ENCODE measurements at regions of chr12 and their contacts with region 1.

Region 1: DNA sequence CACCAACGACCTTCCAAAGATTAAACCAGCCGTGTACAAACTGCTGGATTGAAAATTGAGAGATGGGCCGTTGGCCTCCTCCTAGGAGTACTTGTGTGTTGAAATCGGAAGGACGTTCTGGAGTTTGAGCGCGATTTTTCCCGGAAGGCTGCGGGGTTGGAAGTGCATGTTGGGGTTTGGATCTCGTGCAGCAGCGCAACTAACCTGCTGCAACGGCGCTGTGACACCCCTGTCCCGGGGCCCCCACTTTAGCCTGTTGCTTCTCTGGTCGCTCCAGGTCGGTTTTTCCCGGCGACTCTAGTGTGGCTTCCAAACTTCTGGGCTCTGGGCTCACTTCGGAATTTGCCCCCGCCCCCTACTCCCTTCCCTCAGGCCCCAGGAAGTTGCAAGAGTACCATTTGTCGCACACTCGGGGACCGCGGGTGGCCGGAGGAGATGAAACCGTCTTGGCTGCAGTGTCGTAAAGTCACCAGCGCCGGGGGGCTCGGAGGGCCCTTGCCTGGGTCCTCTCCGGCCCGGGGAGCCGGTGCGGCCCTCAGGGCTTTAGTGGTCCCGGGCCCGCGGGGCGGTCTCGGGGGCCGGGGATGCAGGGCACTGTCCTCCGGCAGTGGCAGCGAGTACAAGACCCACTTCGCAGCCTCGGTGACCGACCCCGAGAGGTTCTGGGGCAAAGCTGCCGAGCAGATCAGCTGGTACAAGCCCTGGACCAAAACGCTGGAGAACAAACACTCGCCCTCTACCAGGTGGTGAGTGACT is at the start of gene ACSS3:
- DNase-seq: no peak
- H3K4me3 ChIP-seq: peak within 1 kb of the TSS in 2 of 3 experiments; percentile 5 to 12
- H3K27ac ChIP-seq: peak within 1 kb of the TSS; percentile 19
- H3K4me1 ChIP-seq: peaks cover 15% of the 10 kb centered on the region
- H3K27me3 ChIP-seq: peaks cover 2 to 6% of the 10 kb centered on the region in 2 experiments
- CTCF ChIP-seq: no peak
- POLR2A ChIP-seq: no peak
- total RNA-seq, gene ACSS3: 0.53 and 0.86 TPM in 2 replicates

Region 2: DNA sequence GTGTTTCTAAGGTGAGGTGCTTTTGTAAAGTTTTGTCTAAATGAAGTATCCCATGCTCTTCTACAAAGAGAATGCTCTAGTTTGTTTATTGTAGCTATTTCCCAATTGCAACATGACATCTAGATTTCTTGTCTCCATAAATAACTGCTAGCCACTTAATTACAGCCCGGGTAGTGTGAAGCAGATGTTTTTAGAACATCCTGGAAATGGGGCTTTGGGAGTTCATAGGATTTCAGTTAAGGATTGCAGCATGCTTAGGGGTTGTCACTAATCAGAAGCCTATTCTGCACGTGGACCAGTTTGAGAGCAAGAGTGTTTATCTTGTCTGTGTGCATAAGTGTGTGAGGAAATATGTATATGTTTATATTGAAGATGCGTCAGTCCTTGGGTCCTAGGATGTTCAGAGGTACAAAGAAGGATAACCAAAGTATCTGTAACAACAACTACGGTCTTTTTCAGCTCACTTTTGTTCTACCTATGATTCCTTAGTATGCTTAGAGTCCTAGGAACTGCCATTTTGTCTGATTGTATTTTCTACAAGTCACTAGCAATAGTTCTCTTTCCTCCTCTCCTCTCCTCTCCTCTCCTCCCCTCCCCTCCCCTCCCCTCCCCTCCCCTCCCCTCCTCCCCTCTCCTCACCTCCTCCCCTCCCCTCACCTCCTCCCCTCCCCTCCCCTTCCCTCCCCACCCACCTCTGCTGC is 135.3 kb after region 1 on chr12:
- CTCF ChIA-PET with region 1: no interaction called
- POLR2A ChIA-PET with region 1: no interaction called
- dilution Hi-C with region 1: no loop called
- intact Hi-C with region 1: loop called (anchors 5 kb)
- DNase-seq: no peak
- H3K4me3 ChIP-seq: no peak overlapping the region
- H3K27ac ChIP-seq: no peak overlapping the region
- H3K4me1 ChIP-seq: peaks cover 19% of the 10 kb centered on the region
- H3K27me3 ChIP-seq: no peaks in the 10 kb centered on the region
- CTCF ChIP-seq: no peak
- POLR2A ChIP-seq: no peak

Measured in endothelial cell of umbilical vein (primary cell).